ENCODE measurements at regions of chr9 and their contacts with region 1.

Region 1: DNA sequence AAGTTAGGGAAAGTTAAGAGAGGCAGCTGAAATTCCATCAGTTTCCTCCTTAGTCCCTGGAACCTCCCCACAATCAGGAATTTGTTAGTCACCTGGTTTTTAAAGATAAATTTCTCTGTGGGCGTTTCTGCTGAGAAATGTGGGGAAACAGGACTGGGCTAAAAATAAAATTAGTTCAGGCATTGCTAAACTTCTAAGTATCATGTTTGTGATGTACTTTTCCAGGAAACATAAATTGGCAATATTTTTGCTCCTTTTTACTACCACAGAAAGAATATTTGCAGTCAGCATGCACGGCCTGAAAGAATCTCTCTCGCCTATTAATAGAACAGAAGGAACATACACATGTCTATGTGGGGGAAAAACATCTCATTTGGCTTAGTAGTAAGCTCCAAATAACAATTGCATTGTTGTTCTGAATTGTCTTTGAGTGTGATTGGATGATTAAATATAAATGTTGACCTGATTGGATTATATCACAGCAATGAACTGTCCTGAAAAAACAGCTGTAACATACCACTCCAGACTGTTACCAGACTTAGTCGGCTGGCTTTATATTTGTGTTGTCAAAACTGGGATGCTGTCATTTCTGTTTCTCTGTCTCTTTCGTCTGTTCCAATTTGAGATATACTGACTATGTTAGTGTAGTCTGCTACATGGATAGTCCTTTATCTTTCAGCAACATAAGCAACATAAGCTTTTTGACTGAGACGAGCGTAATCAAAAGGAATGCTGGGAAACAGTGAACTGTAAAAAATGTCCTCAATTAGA is 12.9 kb downstream of the TJP2 start:
- DNase-seq: no peak
- H3K4me3 Mint-ChIP-seq: peak overlapping the region; percentile 24
- H3K27ac Mint-ChIP-seq: peak overlapping the region; percentile 27
- H3K4me1 Mint-ChIP-seq: peaks cover 41% of the 10 kb centered on the region
- H3K27me3 Mint-ChIP-seq: no peaks in the 10 kb centered on the region

Region 2: DNA sequence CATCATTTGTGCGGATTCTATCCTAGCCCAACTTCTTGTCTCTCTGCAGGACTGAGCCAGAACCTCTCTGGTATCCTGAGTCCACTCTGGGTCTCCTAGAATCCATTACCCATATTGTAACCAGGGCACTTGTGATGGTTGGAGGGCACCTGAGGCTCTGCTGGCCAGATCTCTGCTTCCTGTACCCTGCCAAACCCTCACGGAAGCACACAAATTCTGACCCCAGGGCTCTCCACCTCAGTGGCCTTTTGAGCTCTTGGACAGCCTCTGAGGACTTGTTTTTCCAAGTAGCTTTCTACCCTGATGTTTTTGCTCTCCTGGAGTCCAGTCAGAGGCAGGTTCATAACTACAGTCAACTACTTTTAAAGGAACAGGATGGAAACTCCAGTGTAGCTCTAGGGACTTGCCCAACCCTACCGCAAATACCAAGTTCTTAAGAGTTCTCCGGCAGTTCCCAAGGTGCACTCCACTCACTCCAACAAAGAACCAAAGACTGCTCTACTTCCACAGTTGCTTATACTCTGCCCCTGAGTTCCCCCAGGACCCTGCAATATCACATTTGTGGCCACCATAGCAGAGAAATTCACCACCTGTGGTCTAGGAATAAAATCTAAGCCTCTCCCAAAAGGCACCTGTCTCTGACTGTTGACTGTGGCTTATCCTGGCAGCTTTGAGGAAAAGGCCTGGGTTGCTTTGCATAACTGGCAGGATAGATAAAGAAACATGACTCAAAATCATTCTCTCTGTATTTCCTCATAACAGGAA is 472.4 kb before region 1 on chr9:
- intact Hi-C with region 1: loop called (anchors 5 kb)
- DNase-seq: no peak
- H3K4me3 Mint-ChIP-seq: no peak overlapping the region
- H3K27ac Mint-ChIP-seq: no peak overlapping the region
- H3K4me1 Mint-ChIP-seq: peaks cover 12% of the 10 kb centered on the region
- H3K27me3 Mint-ChIP-seq: peaks cover 10% of the 10 kb centered on the region

Region 3: GRCh38 chr9:68869022-68869421 is 318.0 kb before region 1 on chr9:
- intact Hi-C with region 1: no loop called
- DNase-seq: no peak
- H3K4me3 Mint-ChIP-seq: no peak overlapping the region
- H3K27ac Mint-ChIP-seq: no peak overlapping the region
- H3K4me1 Mint-ChIP-seq: no peaks in the 10 kb centered on the region
- H3K27me3 Mint-ChIP-seq: no peaks in the 10 kb centered on the region

Region 4: DNA sequence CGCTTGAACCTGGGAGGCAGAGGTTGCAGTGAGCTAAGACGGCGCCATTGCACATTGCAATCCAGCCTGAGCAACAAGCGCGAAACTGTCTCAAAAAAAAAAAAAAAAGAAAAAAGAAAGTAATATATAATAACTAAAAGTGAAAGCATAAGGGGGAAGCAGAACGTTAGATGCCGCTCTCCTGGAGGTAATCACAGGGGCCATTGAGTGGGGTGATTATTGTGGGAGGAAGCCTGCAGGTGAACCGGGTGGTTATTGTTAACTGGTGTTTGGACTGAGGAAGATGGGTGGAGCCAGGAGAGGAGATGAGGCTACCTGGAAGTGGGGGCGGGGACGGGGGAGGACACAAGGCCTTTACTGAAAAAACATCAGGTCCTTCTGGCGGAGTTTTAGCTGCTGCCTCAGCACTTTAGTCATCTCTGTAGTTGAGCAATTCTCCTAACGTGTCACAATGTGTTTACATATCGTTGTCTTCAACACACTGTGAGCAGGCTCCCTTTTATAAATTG is 18.3 kb before region 1 on chr9:
- intact Hi-C with region 1: loop called (anchors 2 kb)
- DNase-seq: peak; percentile 86
- H3K4me3 Mint-ChIP-seq: peak overlapping the region; percentile 83
- H3K27ac Mint-ChIP-seq: peak overlapping the region; percentile 91
- H3K4me1 Mint-ChIP-seq: peaks cover 34% of the 10 kb centered on the region
- H3K27me3 Mint-ChIP-seq: peaks cover 13% of the 10 kb centered on the region

Measured in activated CD4-positive, alpha-beta T cell treated with anti-CD3 and anti-CD28 coated beads, Interleukin-2, amount 10 ng/mL, durations not matched to agents 24 days and 14 days (primary cell).